Gastrocnemius medialis (tissue), 4 donors: ENCODE measurements at regions of chr13 and their contacts with region 1.

Region 1: GRCh38 chr13:22717036-22717435 is 463.7 kb upstream of the SGCG start:
- DNase-seq: no peak
- ATAC-seq: no peak
- H3K4me3 ChIP-seq: no peak overlapping the region
- H3K27ac ChIP-seq: no peak overlapping the region
- H3K4me1 ChIP-seq: no peaks in the 10 kb centered on the region
- H3K27me3 ChIP-seq: no peaks in the 10 kb centered on the region
- CTCF ChIP-seq: no peak
- POLR2A ChIP-seq: no peak

Region 2: GRCh38 chr13:22776394-22777186 is 59.6 kb after region 1 on chr13:
- in situ Hi-C with region 1: loop called in 1 of 4 experiments (anchors 10 kb)
- intact Hi-C with region 1: no loop called
- DNase-seq: no peak
- ATAC-seq: no peak
- H3K4me3 ChIP-seq: no peak overlapping the region
- H3K27ac ChIP-seq: no peak overlapping the region
- H3K4me1 ChIP-seq: no peaks in the 10 kb centered on the region
- H3K27me3 ChIP-seq: no peaks in the 10 kb centered on the region
- CTCF ChIP-seq: no peak
- POLR2A ChIP-seq: no peak

Region 3: GRCh38 chr13:22837980-22838647 is 121.1 kb after region 1 on chr13:
- in situ Hi-C with region 1: no loop called
- intact Hi-C with region 1: no loop called
- DNase-seq: no peak
- ATAC-seq: no peak
- H3K4me3 ChIP-seq: peak overlapping the region; percentile 23 to 44 (median 39)
- H3K27ac ChIP-seq: no peak overlapping the region
- H3K4me1 ChIP-seq: no peaks in the 10 kb centered on the region
- H3K27me3 ChIP-seq: no peaks in the 10 kb centered on the region
- CTCF ChIP-seq: no peak
- POLR2A ChIP-seq: no peak

Region 4: DNA sequence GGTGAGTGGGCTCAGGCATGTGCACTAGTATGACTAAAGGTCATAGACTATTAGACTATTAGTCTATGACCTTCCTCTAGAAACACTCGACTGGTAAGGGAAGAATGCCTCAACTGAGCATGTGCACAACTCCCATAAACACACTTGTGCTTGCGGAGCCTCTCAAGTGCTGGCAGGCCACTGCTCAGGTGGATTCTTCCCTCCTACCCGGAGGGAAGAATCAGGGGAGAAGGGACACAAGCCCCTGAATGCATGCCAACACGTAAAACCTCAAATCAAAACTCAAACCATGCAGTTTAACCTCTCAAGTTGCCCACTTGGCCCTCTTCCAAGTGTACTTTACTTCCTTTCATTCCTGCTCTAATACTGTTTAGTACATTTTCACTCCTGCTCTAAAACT is 176.2 kb after region 1 on chr13:
- in situ Hi-C with region 1: no loop called
- intact Hi-C with region 1: no loop called
- DNase-seq: no peak
- ATAC-seq: no peak
- H3K4me3 ChIP-seq: no peak overlapping the region
- H3K27ac ChIP-seq: no peak overlapping the region
- H3K4me1 ChIP-seq: no peaks in the 10 kb centered on the region
- H3K27me3 ChIP-seq: no peaks in the 10 kb centered on the region
- CTCF ChIP-seq: no peak
- POLR2A ChIP-seq: no peak